ENCODE measurements at regions of chr5 and their contacts with region 1.

Region 1: DNA sequence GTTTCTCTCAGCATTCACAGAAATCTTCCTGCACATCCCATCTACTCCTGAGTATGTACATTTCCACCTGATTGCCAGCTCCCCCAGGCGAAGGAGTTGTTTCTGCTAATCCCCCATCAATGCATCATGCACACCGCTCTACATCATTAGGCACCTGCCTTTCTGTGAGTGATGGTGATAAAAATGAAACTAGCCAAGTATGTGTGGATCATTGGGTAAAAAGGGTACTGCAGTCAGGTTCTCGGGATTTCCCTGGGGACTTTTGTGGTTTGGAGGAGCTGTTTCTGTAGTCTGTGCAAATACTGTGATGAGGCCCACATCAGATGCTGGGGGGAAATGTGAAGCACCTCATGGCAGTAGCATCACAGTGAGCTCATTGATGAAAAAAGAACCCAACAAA is 30.4 kb downstream of the CAMK4 start:
- DNase-seq: peak; percentile 91
- ATAC-seq: peak; percentile 86
- H3K4me3 Mint-ChIP-seq: peak overlapping the region; percentile 63
- H3K27ac Mint-ChIP-seq: peak overlapping the region; percentile 95
- H3K4me1 Mint-ChIP-seq: peaks cover 91% of the 10 kb centered on the region
- H3K27me3 Mint-ChIP-seq: no peaks in the 10 kb centered on the region

Region 2: DNA sequence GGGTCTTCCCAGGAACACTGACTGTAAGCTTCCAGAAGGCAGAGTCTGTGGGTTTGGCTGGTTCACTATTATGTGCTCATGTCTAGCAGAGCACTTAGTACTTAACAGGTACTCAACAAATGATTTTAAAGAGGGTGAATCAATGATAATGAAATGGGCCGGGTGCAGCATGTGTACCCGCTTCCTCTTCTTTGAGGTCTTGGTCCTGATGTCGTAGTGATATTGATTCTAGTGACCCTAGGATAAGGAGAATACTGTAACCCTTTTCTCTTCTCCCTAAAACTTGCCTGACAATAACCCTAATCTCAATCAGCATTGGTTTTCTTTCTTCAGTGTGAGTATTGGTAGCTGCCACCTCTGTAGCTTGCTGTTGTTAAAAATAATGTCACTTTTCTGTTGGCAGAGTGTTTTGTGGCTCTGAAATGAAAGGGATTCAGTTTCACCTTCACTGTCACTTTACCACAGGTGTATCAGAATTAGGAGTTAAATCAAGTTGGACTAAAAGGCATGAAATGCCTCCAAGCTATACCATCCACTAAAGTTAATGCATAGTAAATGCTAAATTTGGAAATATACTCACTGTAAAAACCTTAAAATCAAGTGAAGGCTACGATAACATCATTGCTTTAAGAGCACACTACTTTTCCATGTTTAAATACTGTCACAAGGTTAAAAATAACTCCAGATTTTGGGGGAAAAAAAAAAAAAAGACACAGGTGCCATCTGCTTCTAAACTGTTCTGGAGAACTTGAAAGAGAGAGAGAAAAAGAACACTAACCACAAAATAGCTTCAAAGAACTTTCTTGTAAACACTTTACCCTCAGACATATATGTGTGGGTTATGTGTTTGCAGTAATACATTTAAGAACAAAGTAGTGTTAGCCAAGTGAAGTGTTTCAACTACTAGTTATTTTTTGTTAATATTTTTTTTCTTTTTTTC is 24.5 kb before region 1 on chr5:
- CTCF ChIA-PET with region 1: interaction called, 132 read pairs
- POLR2A ChIA-PET with region 1: interaction called, 47 read pairs
- intact Hi-C with region 1: loop called (anchors 1 to 2 kb)
- DNase-seq: peak; percentile 36
- ATAC-seq: peak; percentile 49
- H3K4me3 Mint-ChIP-seq: peak overlapping the region; percentile 69
- H3K27ac Mint-ChIP-seq: peak overlapping the region; percentile 96
- H3K4me1 Mint-ChIP-seq: peaks cover 71% of the 10 kb centered on the region
- H3K27me3 Mint-ChIP-seq: no peaks in the 10 kb centered on the region

Region 3: DNA sequence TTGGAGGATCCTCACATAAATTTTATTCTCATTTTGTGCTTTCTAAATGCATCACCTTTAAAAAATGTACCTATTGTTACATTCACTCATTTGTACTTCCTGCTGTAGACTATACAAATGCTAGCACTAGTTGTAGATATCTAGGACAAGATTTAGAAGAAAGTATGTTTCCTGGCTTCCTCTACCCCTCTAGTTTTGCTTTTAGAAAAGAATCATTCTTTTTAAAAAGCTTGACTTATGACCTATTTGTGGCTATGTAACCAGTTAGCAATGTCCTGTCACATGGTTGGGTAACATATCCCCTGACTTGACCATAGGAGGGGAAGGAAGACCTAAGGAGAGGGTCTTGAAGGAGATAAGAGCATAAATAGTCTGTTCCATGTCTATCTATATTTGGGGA is 17.1 kb before region 1 on chr5:
- CTCF ChIA-PET with region 1: interaction called, 132 read pairs
- POLR2A ChIA-PET with region 1: interaction called, 35 read pairs
- intact Hi-C with region 1: loop called (anchors 1 kb)
- DNase-seq: no peak
- ATAC-seq: peak; percentile 35
- H3K4me3 Mint-ChIP-seq: peak overlapping the region; percentile 63
- H3K27ac Mint-ChIP-seq: peak overlapping the region; percentile 93
- H3K4me1 Mint-ChIP-seq: peaks cover 94% of the 10 kb centered on the region
- H3K27me3 Mint-ChIP-seq: no peaks in the 10 kb centered on the region

Region 4: DNA sequence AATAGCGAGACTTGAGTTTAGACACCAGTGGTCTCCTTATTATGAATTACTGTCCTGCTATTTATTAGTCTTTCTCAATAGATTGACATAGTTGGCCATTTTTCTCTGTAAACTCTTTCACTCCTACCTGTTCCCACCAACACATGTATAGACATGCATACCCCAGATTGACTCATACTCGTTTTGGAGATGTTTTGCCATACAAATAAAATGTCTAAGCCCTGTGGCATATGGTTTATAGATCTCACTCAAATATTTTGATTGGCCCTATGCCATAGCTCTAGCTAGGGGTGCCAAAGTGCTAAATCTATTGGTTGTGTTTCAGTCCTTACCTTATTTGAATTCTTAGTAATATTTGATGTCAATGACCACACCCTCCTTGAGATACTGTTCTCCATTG is 11.9 kb after region 1 on chr5:
- CTCF ChIA-PET with region 1: interaction called, 10 read pairs
- POLR2A ChIA-PET with region 1: no interaction called
- intact Hi-C with region 1: loop called (anchors 1 kb)
- DNase-seq: no peak
- ATAC-seq: no peak
- H3K4me3 Mint-ChIP-seq: no peak overlapping the region
- H3K27ac Mint-ChIP-seq: peak overlapping the region; percentile 65
- H3K4me1 Mint-ChIP-seq: peaks cover 57% of the 10 kb centered on the region
- H3K27me3 Mint-ChIP-seq: no peaks in the 10 kb centered on the region

Region 5: DNA sequence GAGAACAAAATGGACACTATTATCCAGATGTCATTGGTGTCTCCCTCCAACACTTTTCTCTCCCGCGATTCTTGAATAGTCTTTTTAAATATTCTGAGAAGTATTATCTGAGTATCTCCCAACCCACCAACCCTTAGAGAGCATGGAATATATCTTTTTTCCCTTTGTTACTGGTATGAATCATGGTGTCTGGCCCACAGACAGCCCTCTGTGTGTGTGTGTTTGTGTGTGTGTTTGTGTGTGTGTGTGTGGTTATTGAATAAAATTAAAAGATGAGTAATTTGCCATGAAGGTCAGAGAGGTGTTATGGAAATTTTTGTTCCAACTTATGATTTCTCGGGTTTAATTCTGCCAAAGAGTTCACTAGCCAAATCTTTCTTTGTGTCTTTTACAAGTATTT is 17.3 kb after region 1 on chr5:
- CTCF ChIA-PET with region 1: interaction called, 27 read pairs
- POLR2A ChIA-PET with region 1: no interaction called
- intact Hi-C with region 1: loop called (anchors 1 to 2 kb)
- DNase-seq: no peak
- ATAC-seq: peak; percentile 34
- H3K4me3 Mint-ChIP-seq: no peak overlapping the region
- H3K27ac Mint-ChIP-seq: peak overlapping the region; percentile 76
- H3K4me1 Mint-ChIP-seq: peaks cover 73% of the 10 kb centered on the region
- H3K27me3 Mint-ChIP-seq: no peaks in the 10 kb centered on the region

Region 6: GRCh38 chr5:111337688-111338087 is 83.1 kb after region 1 on chr5:
- CTCF ChIA-PET with region 1: interaction called, 3 read pairs
- POLR2A ChIA-PET with region 1: no interaction called
- intact Hi-C with region 1: loop called in 1 of 2 experiments (anchors 1 kb)
- DNase-seq: no peak
- ATAC-seq: peak; percentile 88
- H3K4me3 Mint-ChIP-seq: peak overlapping the region; percentile 20
- H3K27ac Mint-ChIP-seq: peak overlapping the region; percentile 87
- H3K4me1 Mint-ChIP-seq: peaks cover 77% of the 10 kb centered on the region
- H3K27me3 Mint-ChIP-seq: no peaks in the 10 kb centered on the region

Region 7: DNA sequence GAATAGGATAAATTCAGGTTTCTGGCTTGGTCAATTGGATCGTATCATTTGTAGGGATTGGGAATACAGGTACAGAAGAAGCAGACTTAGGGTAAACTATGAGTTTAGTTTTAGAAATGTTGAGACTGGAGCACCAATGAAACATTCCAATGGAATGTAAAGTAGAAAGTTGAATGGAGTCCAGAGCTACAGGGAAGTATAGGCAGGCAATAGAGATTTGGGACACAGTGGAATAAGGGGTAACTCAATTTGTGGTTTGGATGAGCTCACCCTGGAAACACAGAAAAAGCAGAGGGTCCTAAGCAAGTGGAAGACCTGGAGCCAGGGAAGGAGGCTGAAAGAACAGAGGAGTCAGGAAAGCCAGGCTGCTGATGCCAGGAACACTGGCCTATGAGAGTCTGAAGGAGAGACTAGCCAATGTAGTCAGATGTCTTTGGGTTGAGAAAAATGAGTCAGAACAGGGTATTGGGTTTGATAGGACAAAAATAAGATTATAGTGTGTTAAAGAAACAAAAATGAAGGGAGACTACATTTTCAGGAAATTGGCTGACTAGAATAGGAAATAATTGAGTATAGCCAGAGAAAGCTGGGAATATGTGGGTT is 185.0 kb after region 1 on chr5:
- CTCF ChIA-PET with region 1: no interaction called
- POLR2A ChIA-PET with region 1: no interaction called
- intact Hi-C with region 1: no loop called
- DNase-seq: no peak
- ATAC-seq: no peak
- H3K4me3 Mint-ChIP-seq: no peak overlapping the region
- H3K27ac Mint-ChIP-seq: peak overlapping the region; percentile 8
- H3K4me1 Mint-ChIP-seq: peaks cover 16% of the 10 kb centered on the region
- H3K27me3 Mint-ChIP-seq: no peaks in the 10 kb centered on the region

Region 8: DNA sequence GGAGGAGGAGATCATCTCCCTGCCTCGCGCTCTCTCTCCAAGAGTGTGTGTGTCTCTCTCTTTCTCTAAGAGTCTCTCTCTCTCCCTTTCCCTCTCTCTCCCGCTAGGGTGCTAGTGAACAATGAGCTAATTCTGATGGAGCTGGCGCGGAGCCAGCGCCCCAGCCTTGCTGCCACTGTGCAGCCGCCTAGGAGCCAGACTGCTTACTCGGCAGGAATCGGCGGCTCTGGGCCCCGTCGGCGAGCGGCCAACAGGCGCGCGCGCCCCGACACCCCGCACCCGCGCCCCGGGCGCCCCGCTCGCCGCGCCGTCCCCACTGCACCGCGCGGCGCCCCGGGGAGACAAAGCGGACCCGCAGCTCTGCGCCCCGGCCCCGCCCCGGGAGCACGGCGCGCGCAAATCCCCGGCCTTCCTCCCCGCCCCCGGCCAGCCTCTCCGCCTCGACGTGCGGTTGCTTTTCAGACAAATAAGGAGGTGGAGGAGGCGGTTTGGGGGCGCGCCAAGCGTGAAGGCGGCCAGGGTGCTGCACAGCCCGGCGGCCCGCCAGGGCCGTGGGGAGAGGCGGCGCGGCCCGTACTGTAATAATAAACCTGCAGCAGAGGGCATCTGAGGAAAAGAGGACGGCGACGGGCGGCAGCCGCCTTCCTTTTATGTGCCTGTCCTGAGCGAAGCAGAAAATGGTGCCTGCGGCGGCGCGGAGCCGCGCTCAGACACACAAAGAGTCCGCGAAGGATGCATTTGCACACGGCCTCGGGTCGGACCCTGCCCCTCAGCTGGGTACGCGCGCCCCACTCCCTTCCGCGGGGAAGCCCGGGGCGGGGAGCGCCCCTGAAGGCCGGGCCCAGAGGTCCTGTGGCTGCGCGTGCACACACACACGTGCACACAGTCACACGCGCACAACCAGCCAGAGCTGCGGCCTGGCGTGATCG is 503.0 kb after region 1 on chr5:
- CTCF ChIA-PET with region 1: no interaction called
- POLR2A ChIA-PET with region 1: no interaction called
- intact Hi-C with region 1: loop called in 1 of 2 experiments (anchors 10 kb)
- DNase-seq: peak; percentile 91
- ATAC-seq: peak; percentile 78
- H3K4me3 Mint-ChIP-seq: peak overlapping the region; percentile 80
- H3K27ac Mint-ChIP-seq: peak overlapping the region; percentile 86
- H3K4me1 Mint-ChIP-seq: peaks cover 18% of the 10 kb centered on the region
- H3K27me3 Mint-ChIP-seq: peaks cover 3% of the 10 kb centered on the region